IMR-90 (cell line): ENCODE measurements at regions of chr7 and their contacts with region 1.

Region 1: GRCh38 chr7:101602484-101603241 is 26.4 kb downstream of the MYL10 start:
- DNase-seq: peak; percentile 67
- ATAC-seq: peak; percentile 99
- H3K4me3 ChIP-seq: no peak overlapping the region
- H3K27ac ChIP-seq: no peak overlapping the region
- H3K4me1 ChIP-seq: no peaks in the 10 kb centered on the region
- H3K27me3 ChIP-seq: peaks cover 11% of the 10 kb centered on the region; the same call in 1 of the 2 replicates
- CTCF ChIP-seq: peak; percentile 95
- POLR2A ChIP-seq: no peak
- RAD21 ChIP-seq: peak; percentile 92

Region 2: DNA sequence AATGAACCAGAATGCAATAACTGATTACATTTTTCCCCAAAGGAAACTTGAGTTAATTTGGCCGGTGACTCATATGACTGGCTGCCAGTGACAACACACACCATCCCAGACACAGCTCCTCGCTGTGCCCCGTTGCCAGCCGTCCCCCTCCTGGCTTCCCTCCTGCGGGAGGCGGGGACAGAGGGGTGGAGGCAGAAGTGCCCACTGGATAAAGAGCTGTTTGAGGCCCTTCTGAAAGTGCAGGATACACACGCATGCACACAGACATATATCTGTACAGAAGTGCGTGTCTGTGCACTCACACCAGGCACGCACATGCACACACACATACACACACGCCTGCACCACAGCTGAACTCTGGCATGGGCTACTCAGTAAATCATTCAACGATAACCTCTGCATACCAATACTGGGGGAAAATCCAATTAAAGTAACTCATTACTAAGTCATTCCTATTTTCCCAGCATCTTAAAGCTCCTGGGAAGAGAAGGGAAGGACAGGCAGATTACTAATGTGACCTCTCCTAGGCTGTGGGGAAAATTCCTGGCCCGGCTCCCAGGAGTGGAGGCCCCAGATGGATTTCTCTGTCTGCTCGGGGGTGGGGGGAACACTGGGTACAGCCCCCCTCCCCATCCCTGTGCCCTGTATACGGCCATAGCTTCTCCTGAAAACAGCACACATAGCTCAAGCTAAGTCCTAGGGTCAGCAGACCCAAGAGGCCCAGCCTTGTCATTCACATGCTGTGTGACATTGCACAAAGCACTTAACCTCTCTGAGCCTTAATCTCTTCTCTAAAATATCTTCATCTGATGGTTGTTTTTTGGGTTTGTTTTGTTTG is 78.7 kb after region 1 on chr7:
- CTCF ChIA-PET with region 1: interaction called, 3 read pairs
- POLR2A ChIA-PET with region 1: no interaction called
- dilution Hi-C with region 1: no loop called
- in situ Hi-C with region 1: no loop called
- intact Hi-C with region 1: loop called (anchors 5 kb)
- DNase-seq: peak; percentile 87
- ATAC-seq: peak; percentile 97
- H3K4me3 ChIP-seq: no peak overlapping the region
- H3K27ac ChIP-seq: peak overlapping the region; percentile 24; the same call in 1 of the 2 replicates
- H3K4me1 ChIP-seq: peaks cover 8% of the 10 kb centered on the region
- H3K27me3 ChIP-seq: no peaks in the 10 kb centered on the region
- CTCF ChIP-seq: no peak
- POLR2A ChIP-seq: no peak
- RAD21 ChIP-seq: no peak

Region 3: DNA sequence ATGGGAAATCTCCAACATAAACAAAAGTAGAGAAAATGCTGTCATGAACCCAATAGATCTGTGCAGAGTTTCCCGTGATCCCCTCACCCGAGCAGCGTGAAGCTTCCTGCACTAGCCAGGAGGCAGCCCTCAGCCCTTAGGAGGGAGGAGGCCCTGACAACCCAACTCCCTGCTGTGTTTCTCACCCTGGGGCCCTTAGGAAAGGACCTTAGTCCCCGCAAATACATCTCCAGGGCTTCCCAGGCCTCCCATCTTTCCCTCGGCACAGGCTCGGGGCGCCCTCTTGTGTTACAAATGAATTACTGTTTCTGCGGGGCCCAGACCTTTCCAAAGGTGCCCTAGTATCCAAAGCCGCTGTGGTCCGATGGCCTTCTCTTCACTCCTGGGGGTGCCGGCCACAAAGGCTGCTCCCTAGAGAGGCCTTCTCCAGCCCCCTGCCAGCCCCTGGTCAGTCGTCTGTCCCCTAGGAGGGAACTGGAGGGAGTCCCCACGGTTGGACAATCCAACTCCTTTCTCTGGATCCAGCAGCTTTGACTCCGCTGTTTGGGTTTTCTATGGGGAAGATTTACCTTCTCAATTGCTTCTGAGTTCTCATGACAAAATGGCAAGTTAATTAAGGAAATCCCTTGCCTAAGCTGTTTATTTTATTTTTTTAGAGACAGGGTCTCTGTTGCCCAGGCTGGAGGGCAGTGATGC is 634.1 kb after region 1 on chr7:
- CTCF ChIA-PET with region 1: no interaction called
- POLR2A ChIA-PET with region 1: no interaction called
- dilution Hi-C with region 1: no loop called
- in situ Hi-C with region 1: loop called (anchors 10 kb)
- intact Hi-C with region 1: loop called (anchors 1 kb)
- DNase-seq: peak; percentile 56
- ATAC-seq: peak; percentile 95
- H3K4me3 ChIP-seq: no peak overlapping the region
- H3K27ac ChIP-seq: no peak overlapping the region
- H3K4me1 ChIP-seq: peaks cover 2% of the 10 kb centered on the region; the same call in 1 of the 2 replicates
- H3K27me3 ChIP-seq: no peaks in the 10 kb centered on the region
- CTCF ChIP-seq: peak; percentile 85
- POLR2A ChIP-seq: no peak
- RAD21 ChIP-seq: peak; percentile 95

Region 4: DNA sequence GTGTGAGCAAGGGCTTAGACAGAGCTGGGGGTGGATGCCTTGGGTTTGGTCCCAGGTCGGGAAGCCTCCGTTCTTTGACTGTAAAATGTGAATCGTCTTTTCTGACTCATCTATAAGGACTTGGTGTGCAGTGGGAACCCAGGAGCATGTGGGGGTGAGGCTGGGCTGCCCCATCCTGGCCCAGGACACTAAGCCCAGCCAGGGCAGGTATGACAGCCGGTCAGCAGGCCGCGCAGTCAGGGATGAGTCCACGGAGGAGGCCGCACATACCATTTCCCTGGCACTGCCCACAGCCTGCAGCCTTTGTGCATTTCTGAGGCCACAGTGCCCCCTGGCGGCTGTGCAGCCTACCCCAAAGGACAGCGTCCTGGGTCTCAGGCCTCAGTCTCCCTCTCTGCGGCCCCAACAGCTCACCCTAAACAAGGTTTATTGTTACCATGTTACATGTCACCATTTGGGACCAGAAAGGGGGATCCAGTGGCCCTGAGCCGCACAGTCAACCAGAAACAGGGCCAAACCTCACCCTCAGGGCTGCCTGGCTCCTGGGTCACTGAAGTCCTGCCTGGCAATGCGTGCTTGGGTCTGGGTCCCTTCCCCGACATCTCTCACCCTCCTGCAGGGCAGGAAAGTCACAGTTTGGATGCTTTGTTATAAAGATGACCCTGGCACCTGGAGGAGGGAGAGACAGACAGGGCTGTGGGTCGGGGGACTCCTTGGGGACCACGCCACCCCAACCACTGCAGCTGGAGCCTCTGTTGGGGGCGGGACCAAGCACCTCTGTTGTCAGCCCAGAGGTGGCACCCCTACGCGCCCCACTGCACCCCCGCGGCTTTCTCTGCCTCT is 669.6 kb after region 1 on chr7:
- CTCF ChIA-PET with region 1: interaction called, 5 read pairs
- POLR2A ChIA-PET with region 1: no interaction called
- dilution Hi-C with region 1: no loop called
- in situ Hi-C with region 1: no loop called
- intact Hi-C with region 1: loop called (anchors 1 kb)
- DNase-seq: peak; percentile 81
- ATAC-seq: peak; percentile 89
- H3K4me3 ChIP-seq: no peak overlapping the region
- H3K27ac ChIP-seq: no peak overlapping the region
- H3K4me1 ChIP-seq: peaks cover 12% of the 10 kb centered on the region
- H3K27me3 ChIP-seq: no peaks in the 10 kb centered on the region
- CTCF ChIP-seq: peak; percentile 94
- POLR2A ChIP-seq: no peak
- RAD21 ChIP-seq: peak; percentile 94